ENCODE measurements at regions of chr9 and their contacts with region 1.

Region 1: GRCh38 chr9:19127881-19128500 is 699 bp upstream of the PLIN2 start:
- DNase-seq: peak in 1 of 2 donors; percentile 72
- H3K4me3 ChIP-seq: peak overlapping the region; percentile 79 to 85
- H3K27ac ChIP-seq: peak overlapping the region; percentile 96 to 97
- H3K4me1 ChIP-seq: peaks cover 10 to 11% of the 10 kb centered on the region in 2 donors
- H3K27me3 ChIP-seq: no peaks in the 10 kb centered on the region
- CTCF ChIP-seq: no peak

Region 2: GRCh38 chr9:19102631-19103345 is 25.2 kb before region 1 on chr9 and contains the start of gene HAUS6:
- intact Hi-C with region 1: loop called (anchors 1 kb)
- DNase-seq: peak; percentile 83 to 99
- H3K4me3 ChIP-seq: peak within 1 kb of the TSS; percentile 67 to 74
- H3K27ac ChIP-seq: peak within 1 kb of the TSS; percentile 85 to 87
- H3K4me1 ChIP-seq: peaks cover 10 to 11% of the 10 kb centered on the region in 2 donors
- H3K27me3 ChIP-seq: no peaks in the 10 kb centered on the region
- CTCF ChIP-seq: peak in 2 of 3 experiments; percentile 41 to 69
- total RNA-seq, gene HAUS6: 3.4 TPM

Region 3: GRCh38 chr9:19174127-19174912 is 46.3 kb after region 1 on chr9:
- intact Hi-C with region 1: loop called (anchors 2 kb)
- DNase-seq: peak; percentile 51 to 92
- H3K4me3 ChIP-seq: no peak overlapping the region
- H3K27ac ChIP-seq: no peak overlapping the region
- H3K4me1 ChIP-seq: peaks cover 0 to 4% of the 10 kb centered on the region in 2 donors
- H3K27me3 ChIP-seq: no peaks in the 10 kb centered on the region
- CTCF ChIP-seq: peak; percentile 54 to 63 (median 61)

Region 4: DNA sequence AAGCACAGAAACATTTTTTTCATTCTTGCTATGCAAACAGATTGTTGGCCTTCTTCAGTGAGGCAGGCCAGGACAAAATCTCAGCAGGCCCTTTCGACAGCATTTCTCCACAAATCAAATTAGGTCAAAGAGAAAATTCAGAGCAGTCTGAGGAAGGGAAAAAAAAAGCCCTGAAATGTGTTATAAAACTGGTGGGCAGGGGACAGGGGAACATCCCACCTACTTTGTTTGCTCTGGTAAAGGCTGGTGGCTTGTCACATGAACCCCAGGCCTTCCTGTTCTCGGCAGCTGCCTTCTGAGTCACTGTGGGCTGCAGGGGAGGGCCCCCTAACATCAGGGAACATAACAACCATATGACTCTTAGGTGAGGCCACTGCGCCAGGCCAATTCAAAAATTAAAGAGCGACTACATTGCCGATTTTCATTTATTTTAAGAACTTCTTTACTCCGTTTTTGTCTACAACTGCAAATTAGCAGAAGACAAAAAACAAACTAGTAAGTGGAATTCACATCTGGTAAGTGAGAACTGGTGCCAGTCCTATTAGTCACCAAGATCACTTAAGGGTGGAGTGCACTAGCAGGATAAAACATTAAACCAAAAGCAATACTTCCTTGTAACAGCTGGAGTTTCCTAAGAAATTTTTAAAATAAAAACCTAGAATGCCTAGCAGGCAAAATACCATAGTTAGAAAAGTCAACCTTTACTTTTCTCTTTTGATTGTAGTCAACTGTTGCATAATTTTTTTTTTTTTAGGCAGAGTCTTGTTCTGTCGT is 56.3 kb after region 1 on chr9:
- intact Hi-C with region 1: loop called (anchors 2 kb)
- DNase-seq: peak; percentile 90 to 96
- H3K4me3 ChIP-seq: peak overlapping the region in 1 of 2 donors; percentile 10
- H3K27ac ChIP-seq: peak overlapping the region; percentile 93 to 96
- H3K4me1 ChIP-seq: peaks cover 10 to 18% of the 10 kb centered on the region in 2 donors
- H3K27me3 ChIP-seq: no peaks in the 10 kb centered on the region
- CTCF ChIP-seq: no peak

Region 5: GRCh38 chr9:19369107-19369506 is 241.1 kb after region 1 on chr9:
- intact Hi-C with region 1: no loop called
- DNase-seq: no peak
- H3K4me3 ChIP-seq: no peak overlapping the region
- H3K27ac ChIP-seq: no peak overlapping the region
- H3K4me1 ChIP-seq: no peaks in the 10 kb centered on the region
- H3K27me3 ChIP-seq: no peaks in the 10 kb centered on the region
- CTCF ChIP-seq: no peak